ENCODE measurements at regions of chr14 and their contacts with region 1.

Region 1: GRCh38 chr14:41429184-41429583 is 177.5 kb upstream of the LRFN5 start:
- DNase-seq: no peak
- H3K4me3 ChIP-seq: no peak overlapping the region
- H3K27ac ChIP-seq: no peak overlapping the region
- H3K4me1 ChIP-seq: no peaks in the 10 kb centered on the region
- H3K27me3 ChIP-seq: no peaks in the 10 kb centered on the region
- CTCF ChIP-seq: no peak
- POLR2A ChIP-seq: no peak

Region 2: GRCh38 chr14:41476526-41476925 is 47.3 kb after region 1 on chr14:
- intact Hi-C with region 1: loop called (anchors 2 kb)
- DNase-seq: no peak
- H3K4me3 ChIP-seq: no peak overlapping the region
- H3K27ac ChIP-seq: no peak overlapping the region
- H3K4me1 ChIP-seq: no peaks in the 10 kb centered on the region
- H3K27me3 ChIP-seq: no peaks in the 10 kb centered on the region
- CTCF ChIP-seq: no peak
- POLR2A ChIP-seq: no peak